Left cardiac atrium (tissue), 4 donors: ENCODE measurements at regions of chr17 and their contacts with region 1.

Region 1: DNA sequence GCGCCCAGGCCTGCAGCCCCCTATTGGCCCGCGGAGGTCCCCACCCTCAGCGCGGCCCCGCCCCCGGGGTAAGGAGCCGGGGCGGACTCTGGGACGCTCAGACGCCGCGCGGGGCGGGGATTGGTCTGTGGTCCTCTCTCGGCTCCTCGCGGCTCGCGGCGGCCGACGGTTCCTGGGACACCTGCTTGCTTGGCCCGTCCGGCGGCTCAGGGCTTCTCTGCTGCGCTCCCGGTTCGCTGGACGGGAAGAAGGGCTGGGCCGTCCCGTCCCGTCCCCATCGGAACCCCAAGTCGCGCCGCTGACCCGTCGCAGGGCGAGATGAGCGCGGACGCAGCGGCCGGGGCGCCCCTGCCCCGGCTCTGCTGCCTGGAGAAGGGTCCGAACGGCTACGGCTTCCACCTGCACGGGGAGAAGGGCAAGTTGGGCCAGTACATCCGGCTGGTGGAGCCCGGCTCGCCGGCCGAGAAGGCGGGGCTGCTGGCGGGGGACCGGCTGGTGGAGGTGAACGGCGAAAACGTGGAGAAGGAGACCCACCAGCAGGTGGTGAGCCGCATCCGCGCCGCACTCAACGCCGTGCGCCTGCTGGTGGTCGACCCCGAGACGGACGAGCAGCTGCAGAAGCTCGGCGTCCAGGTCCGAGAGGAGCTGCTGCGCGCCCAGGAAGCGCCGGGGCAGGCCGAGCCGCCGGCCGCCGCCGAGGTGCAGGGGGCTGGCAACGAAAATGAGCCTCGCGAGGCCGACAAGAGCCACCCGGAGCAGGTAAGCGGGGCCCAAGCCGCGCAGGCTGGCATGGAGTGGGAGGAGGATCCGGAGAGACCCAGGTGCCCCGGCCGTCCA is at the start of gene NHERF1:
- DNase-seq: peak; percentile 96
- ATAC-seq: peak; percentile 95
- total RNA-seq, gene NHERF1: 15.1 to 18.5 TPM

Region 2: DNA sequence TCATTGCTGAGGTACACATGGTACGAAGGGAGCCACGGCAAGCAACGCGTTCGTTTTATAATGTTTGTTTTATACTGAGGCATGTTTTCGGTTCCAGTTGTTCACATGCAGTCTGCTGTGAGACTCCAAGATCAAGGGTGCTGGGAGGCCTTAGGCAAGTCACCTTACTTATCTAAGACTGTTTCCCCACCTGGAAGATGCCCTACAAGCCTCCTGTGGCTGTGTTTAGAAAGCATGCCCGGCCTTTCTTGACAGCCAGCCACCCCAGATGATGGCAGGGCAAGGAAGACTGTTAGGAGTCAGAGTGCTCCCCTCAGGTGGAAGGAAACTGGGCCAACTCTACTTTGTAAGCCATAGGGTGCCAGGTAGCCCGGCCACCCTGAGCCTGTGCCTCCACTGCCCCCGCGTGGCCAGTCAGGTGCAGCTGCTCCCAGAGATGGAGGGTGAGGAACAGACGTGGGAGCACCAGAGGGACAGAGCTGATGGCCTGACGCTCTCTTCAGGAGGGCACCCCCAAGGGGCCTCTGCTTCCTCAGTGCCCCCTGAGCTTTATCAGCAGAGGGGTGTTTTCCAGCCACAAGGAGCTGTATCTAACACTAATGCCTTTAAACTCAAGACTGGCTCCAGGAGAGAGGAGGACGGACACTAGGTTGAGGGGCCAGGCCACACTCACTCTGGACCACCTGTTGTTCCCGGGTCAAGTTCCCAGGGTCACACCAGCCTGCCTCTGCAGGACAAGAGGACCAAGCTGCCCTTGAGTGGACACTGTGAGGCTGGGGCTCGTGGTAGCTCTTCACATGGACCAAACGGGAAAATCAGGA is 22.0 kb after region 1 on chr17:
- intact Hi-C with region 1: loop called in 1 of 2 experiments (anchors 2 kb)
- DNase-seq: peak; percentile 63
- ATAC-seq: peak; percentile 54 to 73